ENCODE measurements at regions of chr3 and their contacts with region 1.

Region 1: DNA sequence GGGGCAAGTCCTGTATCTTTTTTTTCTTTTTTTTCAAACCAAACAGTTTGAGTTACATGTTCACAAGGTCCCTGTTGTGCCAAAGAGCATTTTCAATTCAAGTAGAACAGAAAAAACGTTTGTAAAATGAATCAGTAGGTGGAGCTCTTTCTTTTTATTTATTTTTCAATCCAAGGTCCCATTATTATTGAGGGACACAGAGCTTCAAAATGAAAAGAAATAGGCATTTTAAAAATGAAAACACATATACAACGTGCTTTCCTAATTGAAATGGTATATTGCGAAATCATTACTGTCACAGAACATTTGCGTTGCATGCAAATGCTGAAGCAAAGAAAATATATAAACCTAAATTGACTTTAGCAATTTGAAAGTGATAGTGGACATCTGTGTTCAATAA is 711.0 kb downstream of the MECOM start:
- DNase-seq: peak; percentile 62
- H3K4me3 ChIP-seq: no peak overlapping the region
- H3K27ac ChIP-seq: no peak overlapping the region
- H3K4me1 ChIP-seq: no peaks in the 10 kb centered on the region
- H3K27me3 ChIP-seq: no peaks in the 10 kb centered on the region
- CTCF ChIP-seq: no peak
- POLR2A ChIP-seq: no peak

Region 2: DNA sequence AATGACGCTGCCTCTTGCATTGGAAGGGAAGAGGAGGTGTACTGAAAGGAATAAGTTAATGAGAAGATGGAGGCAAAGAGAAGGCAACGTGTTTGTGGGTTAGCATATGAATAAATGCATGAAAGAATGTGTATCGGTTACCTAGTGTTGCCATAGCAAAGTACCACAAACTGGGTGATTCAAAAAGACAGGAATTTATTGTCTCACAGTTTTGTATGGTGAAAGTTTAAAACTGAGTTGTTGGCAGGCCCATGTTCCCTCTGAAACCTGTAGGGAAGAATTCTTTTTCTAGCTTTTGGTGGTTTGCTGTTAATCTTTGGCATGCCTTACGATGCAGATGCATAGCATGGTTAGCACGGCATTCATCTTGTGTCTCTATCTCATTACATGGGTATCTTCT is 18.9 kb before region 1 on chr3:
- CTCF ChIA-PET with region 1: no interaction called
- POLR2A ChIA-PET with region 1: no interaction called
- dilution Hi-C with region 1: no loop called
- intact Hi-C with region 1: no loop called
- DNase-seq: no peak
- H3K4me3 ChIP-seq: no peak overlapping the region
- H3K27ac ChIP-seq: no peak overlapping the region
- H3K4me1 ChIP-seq: no peaks in the 10 kb centered on the region
- H3K27me3 ChIP-seq: peaks cover 0 to 1% of the 10 kb centered on the region in 2 experiments
- CTCF ChIP-seq: no peak
- POLR2A ChIP-seq: no peak

Region 3: GRCh38 chr3:168964736-168965135 is 12.2 kb after region 1 on chr3:
- CTCF ChIA-PET with region 1: interaction called, 11 read pairs
- POLR2A ChIA-PET with region 1: no interaction called
- dilution Hi-C with region 1: no loop called
- intact Hi-C with region 1: no loop called
- DNase-seq: no peak
- H3K4me3 ChIP-seq: no peak overlapping the region
- H3K27ac ChIP-seq: no peak overlapping the region
- H3K4me1 ChIP-seq: no peaks in the 10 kb centered on the region
- H3K27me3 ChIP-seq: no peaks in the 10 kb centered on the region
- CTCF ChIP-seq: no peak
- POLR2A ChIP-seq: no peak

Region 4: GRCh38 chr3:169133178-169134161 is 180.9 kb after region 1 on chr3:
- CTCF ChIA-PET with region 1: interaction called, 8 read pairs
- POLR2A ChIA-PET with region 1: no interaction called
- dilution Hi-C with region 1: no loop called
- intact Hi-C with region 1: loop called (anchors 5 kb)
- DNase-seq: peak; percentile 83
- H3K4me3 ChIP-seq: no peak overlapping the region
- H3K27ac ChIP-seq: peak overlapping the region; percentile 52
- H3K4me1 ChIP-seq: peaks cover 44% of the 10 kb centered on the region
- H3K27me3 ChIP-seq: no peaks in the 10 kb centered on the region
- CTCF ChIP-seq: peak in 1 of 2 donors; percentile 16
- POLR2A ChIP-seq: peak; percentile 17

Region 5: DNA sequence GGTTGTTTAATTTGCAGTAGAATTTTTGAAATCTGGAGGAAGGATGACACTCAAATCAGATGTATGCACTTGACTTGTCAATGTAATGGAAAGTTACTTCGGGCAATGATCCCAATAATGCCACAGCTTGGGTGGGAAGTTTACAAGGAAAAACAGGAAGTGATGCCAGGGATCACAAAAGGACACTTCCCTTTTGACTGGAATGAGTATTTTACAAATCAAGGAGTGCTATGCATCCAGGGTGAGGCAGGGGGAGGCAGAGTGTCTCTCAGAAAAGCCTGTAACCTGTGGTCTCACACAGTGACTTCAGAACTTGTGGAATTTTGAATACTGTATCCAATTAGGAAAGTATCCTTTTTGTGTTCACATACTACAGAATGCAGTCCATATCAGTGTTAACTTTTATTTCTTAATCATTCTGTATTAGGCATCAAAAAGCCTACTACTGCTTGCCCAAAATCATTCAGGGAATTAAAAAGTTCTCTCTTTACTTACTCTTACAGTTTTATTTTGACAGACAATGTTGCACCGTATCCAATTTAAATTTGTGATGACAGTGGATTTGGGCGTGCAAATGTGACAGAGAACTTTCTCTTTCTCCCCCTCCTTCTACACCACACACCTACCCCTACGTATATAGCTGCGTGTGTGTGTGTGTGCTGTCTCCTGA is 265.9 kb after region 1 on chr3:
- CTCF ChIA-PET with region 1: interaction called, 4 read pairs
- POLR2A ChIA-PET with region 1: no interaction called
- dilution Hi-C with region 1: no loop called
- intact Hi-C with region 1: loop called (anchors 5 kb)
- DNase-seq: peak; percentile 98
- H3K4me3 ChIP-seq: no peak overlapping the region
- H3K27ac ChIP-seq: peak overlapping the region; percentile 66
- H3K4me1 ChIP-seq: peaks cover 23% of the 10 kb centered on the region
- H3K27me3 ChIP-seq: no peaks in the 10 kb centered on the region
- CTCF ChIP-seq: peak; percentile 74 to 89
- POLR2A ChIP-seq: no peak

Region 6: DNA sequence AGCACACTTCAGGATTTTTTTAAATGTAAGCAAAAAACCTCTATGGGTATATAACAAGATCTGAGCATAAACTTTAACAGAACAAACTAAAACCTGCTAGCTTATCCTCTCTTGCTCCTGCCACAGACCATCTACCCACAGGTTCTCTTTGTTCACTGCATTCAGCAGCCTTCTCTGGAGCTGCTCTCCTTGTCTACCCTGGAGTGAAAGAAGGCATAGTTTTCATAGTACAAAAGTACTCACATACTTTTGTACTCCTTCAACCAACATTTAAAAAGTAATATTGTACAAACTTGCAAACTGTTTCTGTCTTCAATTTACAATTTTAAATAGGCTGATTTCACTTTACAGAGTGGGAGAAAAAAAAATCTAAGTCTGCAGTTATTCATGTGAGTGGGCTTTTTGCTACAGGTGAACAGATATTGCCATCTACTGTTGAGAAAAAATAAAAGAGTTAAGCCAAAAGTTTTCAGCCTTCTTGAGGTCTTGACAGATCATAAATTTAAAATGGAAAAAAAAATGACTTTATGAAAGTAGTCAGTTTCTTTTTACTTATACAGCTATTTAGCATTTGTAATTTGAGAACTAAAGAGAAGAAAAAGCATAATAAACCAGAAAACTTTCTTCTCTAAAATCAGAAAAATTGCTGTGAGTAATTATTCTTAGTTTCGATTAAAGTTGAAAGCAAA is 792.0 kb after region 1 on chr3:
- CTCF ChIA-PET with region 1: interaction called, 20 read pairs
- POLR2A ChIA-PET with region 1: no interaction called
- dilution Hi-C with region 1: no loop called
- intact Hi-C with region 1: loop called (anchors 2 kb)
- DNase-seq: peak; percentile 74
- H3K4me3 ChIP-seq: no peak overlapping the region
- H3K27ac ChIP-seq: no peak overlapping the region
- H3K4me1 ChIP-seq: no peaks in the 10 kb centered on the region
- H3K27me3 ChIP-seq: peaks cover 2 to 13% of the 10 kb centered on the region in 2 experiments
- CTCF ChIP-seq: peak in 1 of 2 donors; percentile 21
- POLR2A ChIP-seq: no peak

Measured in endothelial cell of umbilical vein (primary cell).